ENCODE measurements at regions of chr20 and their contacts with region 1.

Region 1: DNA sequence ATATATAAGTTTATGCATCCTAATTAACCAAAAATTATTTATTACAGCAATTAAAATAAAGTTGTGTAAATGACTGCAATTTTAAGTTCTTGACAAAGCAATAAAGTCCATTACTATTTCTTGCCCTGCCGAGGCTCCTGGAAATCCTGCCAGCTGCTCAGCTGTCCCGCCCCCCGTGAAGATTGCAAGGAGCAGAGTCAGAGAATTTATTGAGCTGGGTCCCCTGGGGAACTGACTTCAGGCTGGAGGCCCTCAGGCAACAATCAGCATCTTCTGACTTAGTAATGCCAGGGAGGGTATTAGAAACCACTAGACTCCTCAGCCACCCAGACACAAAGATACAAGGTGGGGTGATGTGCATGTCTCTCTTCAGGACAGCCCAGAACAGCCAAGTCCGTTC is 92.3 kb downstream of the EDN3 start:
- DNase-seq: no peak
- H3K4me3 ChIP-seq: no peak overlapping the region
- CTCF ChIP-seq: no peak

Region 2: GRCh38 chr20:59403261-59403961 is 10.7 kb after region 1 on chr20:
- CTCF ChIA-PET with region 1: interaction called, 15 read pairs
- POLR2A ChIA-PET with region 1: no interaction called
- DNase-seq: no peak
- H3K4me3 ChIP-seq: peak overlapping the region; percentile 23; the same call in 1 of the 2 replicates
- CTCF ChIP-seq: peak; percentile 96

Measured in AG04449 (cell line).